K562 (cell line): ENCODE measurements at regions of chr1 and their contacts with region 1.

Region 1: DNA sequence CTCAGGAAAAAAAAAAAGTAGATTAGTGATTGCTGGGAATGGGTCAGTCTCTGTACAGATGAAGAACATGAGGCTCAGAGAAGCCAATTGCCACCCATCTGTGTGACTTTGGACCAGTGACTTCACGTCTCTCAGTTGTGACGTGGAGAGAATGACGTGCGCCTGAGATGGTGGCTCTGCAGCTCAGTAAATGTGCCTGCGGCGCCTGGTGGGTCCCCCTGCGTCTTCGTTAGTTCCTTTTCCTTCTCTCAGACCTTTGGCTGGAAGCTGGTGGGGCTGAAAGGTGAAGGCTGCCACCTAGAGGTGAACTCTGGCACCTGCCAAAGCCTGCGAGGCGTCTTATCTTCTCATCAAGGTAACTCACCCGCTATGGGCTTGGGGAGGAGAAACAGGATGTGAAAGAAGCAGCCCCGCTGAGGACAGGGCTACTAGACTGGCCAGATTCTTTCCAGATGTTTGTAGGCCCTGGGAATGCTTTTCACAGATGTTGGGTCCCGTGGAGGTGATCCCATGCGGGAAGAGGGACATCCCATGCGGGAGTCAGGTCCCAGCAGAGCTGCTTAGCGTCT is 8.7 kb upstream of the E2F2 start:
- DNase-seq: peak; percentile 94 to 98 (median 96)
- ATAC-seq: peak; percentile 98
- H3K4me3 ChIP-seq: 0 out of 2 replicates have a peak overlapping the region, but pooled peaks have one; percentile 7
- H3K27ac ChIP-seq: peak overlapping the region; percentile 37; the same call in 1 of the 3 replicates
- H3K4me1 ChIP-seq: peaks cover 7 to 8% of the 10 kb centered on the region in 2 experiments; a peak in 4 of 5 replicates
- H3K27me3 ChIP-seq: no peaks in the 10 kb centered on the region
- CTCF ChIP-seq: peak; percentile 97 to 100 (median 99)
- EP300 ChIP-seq: peak; percentile 77
- POLR2A ChIP-seq: no peak; the same call in 1 of the 2 replicates
- RAD21 ChIP-seq: peak; percentile 100

Region 2: DNA sequence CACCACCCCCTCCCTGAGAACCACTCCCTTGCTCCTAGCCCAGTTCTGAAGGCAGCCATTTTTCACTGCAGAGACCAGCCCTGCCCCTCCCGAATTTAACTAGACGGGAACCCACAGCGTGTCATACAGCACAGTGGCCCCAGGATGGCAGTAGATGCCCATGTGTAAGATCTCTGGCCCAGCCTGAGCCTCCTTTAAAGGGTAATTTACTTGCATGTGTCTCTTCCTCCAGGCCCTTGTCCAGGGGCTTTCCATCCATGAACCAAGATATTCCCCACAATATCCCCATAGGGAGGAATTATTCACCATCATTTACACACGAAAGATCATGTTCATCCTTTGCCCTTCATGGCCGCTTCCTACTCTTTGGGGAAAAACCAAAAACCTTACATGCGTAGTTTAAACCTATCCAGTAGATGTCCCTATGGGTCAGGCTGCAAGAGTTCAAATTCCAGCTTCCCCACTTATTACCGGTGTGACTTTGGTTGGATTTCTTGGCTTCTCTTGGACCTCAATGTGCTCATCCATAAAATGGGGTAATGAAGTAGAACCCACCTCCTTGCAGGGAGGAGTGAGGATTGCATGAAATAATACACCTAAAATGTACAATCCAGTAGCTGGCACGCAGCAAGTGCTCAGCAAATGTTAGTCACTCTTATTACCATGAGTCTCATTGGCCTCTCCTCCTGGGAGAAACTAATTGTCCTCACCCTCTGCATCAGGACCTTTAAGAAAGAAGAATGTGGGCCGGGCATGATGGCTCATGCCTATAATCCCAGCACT is 563.1 kb before region 1 on chr1:
- CTCF ChIA-PET with region 1: interaction called, 9 read pairs
- POLR2A ChIA-PET with region 1: no interaction called
- in situ Hi-C with region 1: loop called (anchors 10 kb)
- intact Hi-C with region 1: loop called (anchors 10 kb)
- DNase-seq: peak; percentile 84 to 87 (median 86)
- ATAC-seq: peak; percentile 97
- H3K4me3 ChIP-seq: no peak overlapping the region
- H3K27ac ChIP-seq: no peak overlapping the region
- H3K4me1 ChIP-seq: peaks cover 0 to 4% of the 10 kb centered on the region in 2 experiments; a peak in 2 of 5 replicates
- H3K27me3 ChIP-seq: peaks cover 8 to 20% of the 10 kb centered on the region in 2 experiments
- CTCF ChIP-seq: peak; percentile 86 to 99 (median 91)
- EP300 ChIP-seq: no peak
- POLR2A ChIP-seq: no peak
- RAD21 ChIP-seq: peak; percentile 97

Region 3: GRCh38 chr1:23216771-23217420 is 322.9 kb before region 1 on chr1:
- CTCF ChIA-PET with region 1: interaction called, 3 read pairs
- POLR2A ChIA-PET with region 1: no interaction called
- in situ Hi-C with region 1: loop called (anchors 10 kb)
- intact Hi-C with region 1: loop called (anchors 10 kb)
- DNase-seq: peak; percentile 41 to 88 (median 80)
- ATAC-seq: peak; percentile 86
- H3K4me3 ChIP-seq: peak overlapping the region; percentile 42
- H3K27ac ChIP-seq: no peak overlapping the region
- H3K4me1 ChIP-seq: peaks cover 0 to 13% of the 10 kb centered on the region in 2 experiments; a peak in 4 of 5 replicates
- H3K27me3 ChIP-seq: peaks cover 34 to 60% of the 10 kb centered on the region in 2 experiments
- CTCF ChIP-seq: peak; percentile 76 to 87 (median 77)
- EP300 ChIP-seq: no peak
- POLR2A ChIP-seq: no peak
- RAD21 ChIP-seq: peak; percentile 75 to 89

Region 4: GRCh38 chr1:23422241-23423030 is 117.3 kb before region 1 on chr1:
- CTCF ChIA-PET with region 1: no interaction called
- POLR2A ChIA-PET with region 1: no interaction called
- in situ Hi-C with region 1: no loop called
- intact Hi-C with region 1: loop called (anchors 10 kb)
- DNase-seq: peak; percentile 76 to 82 (median 77)
- ATAC-seq: peak; percentile 85
- H3K4me3 ChIP-seq: no peak overlapping the region
- H3K27ac ChIP-seq: peak overlapping the region; percentile 60
- H3K4me1 ChIP-seq: peaks cover 22 to 31% of the 10 kb centered on the region in 2 experiments
- H3K27me3 ChIP-seq: no peaks in the 10 kb centered on the region
- CTCF ChIP-seq: no peak
- EP300 ChIP-seq: no peak
- POLR2A ChIP-seq: peak; percentile 55
- RAD21 ChIP-seq: no peak

Region 5: GRCh38 chr1:23577056-23578004 is 37.5 kb after region 1 on chr1:
- CTCF ChIA-PET with region 1: no interaction called
- POLR2A ChIA-PET with region 1: no interaction called
- in situ Hi-C with region 1: no loop called
- intact Hi-C with region 1: no loop called
- DNase-seq: peak; percentile 50 to 69 (median 56)
- ATAC-seq: peak; percentile 75
- H3K4me3 ChIP-seq: no peak overlapping the region
- H3K27ac ChIP-seq: peak overlapping the region; percentile 17; the same call in 1 of the 3 replicates
- H3K4me1 ChIP-seq: peaks cover 3 to 10% of the 10 kb centered on the region in 2 experiments
- H3K27me3 ChIP-seq: no peaks in the 10 kb centered on the region; a peak in 1 of 5 replicates
- CTCF ChIP-seq: no peak
- EP300 ChIP-seq: no peak
- POLR2A ChIP-seq: no peak
- RAD21 ChIP-seq: no peak

Region 6: GRCh38 chr1:23634842-23635651 is 95.3 kb after region 1 on chr1:
- CTCF ChIA-PET with region 1: interaction called, 147 read pairs
- POLR2A ChIA-PET with region 1: interaction called, 5 read pairs
- in situ Hi-C with region 1: no loop called
- intact Hi-C with region 1: loop called (anchors 1 kb)
- DNase-seq: peak; percentile 76 to 87 (median 86)
- ATAC-seq: peak; percentile 82
- H3K4me3 ChIP-seq: peak overlapping the region; percentile 4; the same call in 1 of the 2 replicates
- H3K27ac ChIP-seq: peak overlapping the region; percentile 35; the same call in 1 of the 3 replicates
- H3K4me1 ChIP-seq: peaks cover 12 to 21% of the 10 kb centered on the region in 2 experiments; a peak in 3 of 5 replicates
- H3K27me3 ChIP-seq: peaks cover 3 to 17% of the 10 kb centered on the region in 2 experiments; a peak in 2 of 5 replicates
- CTCF ChIP-seq: peak; percentile 78 to 98 (median 97)
- EP300 ChIP-seq: no peak
- POLR2A ChIP-seq: no peak
- RAD21 ChIP-seq: peak; percentile 41 to 72

Region 7: DNA sequence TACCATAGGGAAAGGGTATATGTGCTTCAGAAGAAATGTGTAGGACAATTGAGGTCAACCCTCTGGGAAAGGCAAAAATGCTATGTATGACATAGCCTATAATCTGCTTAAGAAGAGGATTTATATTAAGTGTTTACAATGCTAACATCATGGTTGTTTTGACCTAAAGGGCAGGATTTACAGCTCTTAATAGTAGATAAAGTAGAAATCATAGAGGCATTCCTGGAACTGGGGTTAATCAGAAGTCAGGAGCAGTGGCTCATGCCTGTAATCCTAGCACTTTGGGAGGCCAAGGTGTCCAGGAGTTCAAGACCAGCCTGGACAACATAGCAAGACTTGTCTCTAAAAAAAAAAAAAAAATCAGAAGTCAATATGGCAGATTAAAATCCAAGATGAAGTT is 143.2 kb after region 1 on chr1:
- CTCF ChIA-PET with region 1: no interaction called
- POLR2A ChIA-PET with region 1: no interaction called
- in situ Hi-C with region 1: no loop called
- intact Hi-C with region 1: no loop called
- DNase-seq: no peak
- ATAC-seq: no peak
- H3K4me3 ChIP-seq: no peak overlapping the region
- H3K27ac ChIP-seq: no peak overlapping the region
- H3K4me1 ChIP-seq: peaks cover 5 to 6% of the 10 kb centered on the region in 2 experiments; a peak in 2 of 5 replicates
- H3K27me3 ChIP-seq: peaks cover 23 to 27% of the 10 kb centered on the region in 2 experiments
- CTCF ChIP-seq: no peak
- EP300 ChIP-seq: no peak
- POLR2A ChIP-seq: no peak
- RAD21 ChIP-seq: no peak

Region 8: GRCh38 chr1:23916209-23917131 is 376.7 kb after region 1 on chr1:
- CTCF ChIA-PET with region 1: interaction called, 6 read pairs
- POLR2A ChIA-PET with region 1: no interaction called
- in situ Hi-C with region 1: no loop called
- intact Hi-C with region 1: loop called (anchors 2 kb)
- DNase-seq: peak; percentile 84 to 90 (median 86)
- ATAC-seq: peak; percentile 93
- H3K4me3 ChIP-seq: no peak overlapping the region
- H3K27ac ChIP-seq: peak overlapping the region; percentile 9; the same call in 1 of the 3 replicates
- H3K4me1 ChIP-seq: peaks cover 30 to 48% of the 10 kb centered on the region in 2 experiments
- H3K27me3 ChIP-seq: no peaks in the 10 kb centered on the region
- CTCF ChIP-seq: peak; percentile 90 to 96 (median 95)
- EP300 ChIP-seq: no peak
- POLR2A ChIP-seq: no peak
- RAD21 ChIP-seq: peak; percentile 91 to 96